Activated CD4-positive, alpha-beta memory T cell treated with anti-CD3 and anti-CD28 coated beads for 36 hours (primary cell): ENCODE measurements at regions of chr1 and their contacts with region 1.

Region 1: DNA sequence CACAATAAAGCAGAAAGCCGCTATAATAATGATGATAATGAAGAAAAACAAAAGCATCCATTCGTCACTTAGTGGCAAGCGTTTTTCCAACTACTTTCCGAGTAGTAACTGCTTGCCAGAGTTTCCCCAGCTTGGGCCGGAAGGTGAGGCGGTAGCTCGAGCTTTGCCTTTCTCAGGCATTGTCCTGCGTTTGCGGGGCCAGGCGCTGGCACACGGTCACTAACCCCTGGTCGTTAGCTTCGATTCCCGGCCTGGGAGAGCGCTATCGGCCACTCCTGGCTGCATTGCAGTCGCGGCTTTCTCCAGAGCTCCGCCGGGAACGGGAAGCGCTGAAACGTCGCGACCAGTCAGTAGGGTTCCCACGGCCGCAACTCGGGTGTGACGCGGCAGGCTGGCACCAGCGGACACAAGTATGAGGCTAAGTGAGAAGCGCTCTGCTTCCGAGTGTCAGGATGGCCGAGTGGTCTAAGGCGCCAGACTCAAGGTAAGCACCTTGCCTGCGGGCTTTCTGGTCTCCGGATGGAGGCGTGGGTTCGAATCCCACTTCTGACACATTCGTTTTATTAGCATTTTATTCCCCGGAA is 14.6 kb upstream of the ZNF692 start:
- DNase-seq: peak; percentile 98
- H3K4me3 Mint-ChIP-seq: peak overlapping the region; percentile 91
- H3K27ac Mint-ChIP-seq: peak overlapping the region; percentile 92
- H3K4me1 Mint-ChIP-seq: peaks cover 24% of the 10 kb centered on the region
- H3K27me3 Mint-ChIP-seq: peaks cover 8% of the 10 kb centered on the region

Region 2: DNA sequence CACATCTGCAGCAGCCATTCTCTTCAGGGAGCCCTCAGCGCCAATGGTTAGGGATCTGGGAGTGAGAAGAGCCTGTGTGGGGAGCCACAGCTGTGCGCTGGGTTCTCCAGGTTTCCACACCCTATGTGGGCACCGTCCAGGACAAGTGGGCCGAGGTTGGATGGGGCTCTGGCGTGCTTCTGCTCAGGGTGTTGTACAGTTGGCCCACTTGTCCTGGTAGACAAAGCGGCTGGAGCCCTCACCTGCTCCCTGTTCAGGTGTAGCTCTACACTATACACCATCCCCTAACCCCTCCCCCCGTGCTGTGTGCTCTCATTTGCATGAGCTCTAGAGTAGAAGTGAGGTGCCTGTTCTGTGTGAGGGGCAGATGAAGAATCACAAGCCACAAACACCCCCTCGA is 60.0 kb before region 1 on chr1:
- CTCF ChIA-PET with region 1: no interaction called
- POLR2A ChIA-PET with region 1: no interaction called
- intact Hi-C with region 1: no loop called
- DNase-seq: no peak
- H3K4me3 Mint-ChIP-seq: no peak overlapping the region
- H3K27ac Mint-ChIP-seq: no peak overlapping the region
- H3K4me1 Mint-ChIP-seq: peaks cover 26% of the 10 kb centered on the region
- H3K27me3 Mint-ChIP-seq: no peaks in the 10 kb centered on the region

Region 3: GRCh38 chr1:248825909-248826760 is 47.4 kb before region 1 on chr1 and contains the start of gene SH3BP5L:
- CTCF ChIA-PET with region 1: interaction called, 8 read pairs
- POLR2A ChIA-PET with region 1: interaction called, 13 read pairs
- intact Hi-C with region 1: loop called (anchors 1 kb)
- DNase-seq: peak; percentile 94
- H3K4me3 Mint-ChIP-seq: peak within 1 kb of the TSS; percentile 84
- H3K27ac Mint-ChIP-seq: peak within 1 kb of the TSS; percentile 97
- H3K4me1 Mint-ChIP-seq: peaks cover 52% of the 10 kb centered on the region
- H3K27me3 Mint-ChIP-seq: no peaks in the 10 kb centered on the region
- total RNA-seq, gene SH3BP5L: 19.7 to 19.9 TPM

Region 4: GRCh38 chr1:248837794-248838356 is 35.6 kb before region 1 on chr1 and contains the start of gene ZNF672:
- CTCF ChIA-PET with region 1: interaction called, 4 read pairs
- POLR2A ChIA-PET with region 1: interaction called, 11 read pairs
- intact Hi-C with region 1: loop called (anchors 1 kb)
- DNase-seq: peak; percentile 96
- H3K4me3 Mint-ChIP-seq: no peak within 1 kb of the TSS
- H3K27ac Mint-ChIP-seq: no peak within 1 kb of the TSS
- H3K4me1 Mint-ChIP-seq: peaks cover 27% of the 10 kb centered on the region
- H3K27me3 Mint-ChIP-seq: peaks cover 2% of the 10 kb centered on the region
- total RNA-seq, gene ZNF672: 50.3 to 51.4 TPM